CD8-positive, alpha-beta memory T cell (primary cell): ENCODE measurements at regions of chr3 and their contacts with region 1.

Region 1: GRCh38 chr3:4756855-4757574 is 222.2 kb upstream of the BHLHE40 start:
- DNase-seq: no peak
- H3K4me3 ChIP-seq: no peak overlapping the region
- H3K4me3 Mint-ChIP-seq: no peak overlapping the region
- H3K27ac ChIP-seq: no peak overlapping the region
- H3K27ac Mint-ChIP-seq: no peak overlapping the region
- H3K4me1 ChIP-seq: no peaks in the 10 kb centered on the region
- H3K4me1 Mint-ChIP-seq: peaks cover 0 to 4% (median 3%) of the 10 kb centered on the region in 3 donors
- H3K27me3 ChIP-seq: no peaks in the 10 kb centered on the region
- H3K27me3 Mint-ChIP-seq: no peaks in the 10 kb centered on the region

Region 2: DNA sequence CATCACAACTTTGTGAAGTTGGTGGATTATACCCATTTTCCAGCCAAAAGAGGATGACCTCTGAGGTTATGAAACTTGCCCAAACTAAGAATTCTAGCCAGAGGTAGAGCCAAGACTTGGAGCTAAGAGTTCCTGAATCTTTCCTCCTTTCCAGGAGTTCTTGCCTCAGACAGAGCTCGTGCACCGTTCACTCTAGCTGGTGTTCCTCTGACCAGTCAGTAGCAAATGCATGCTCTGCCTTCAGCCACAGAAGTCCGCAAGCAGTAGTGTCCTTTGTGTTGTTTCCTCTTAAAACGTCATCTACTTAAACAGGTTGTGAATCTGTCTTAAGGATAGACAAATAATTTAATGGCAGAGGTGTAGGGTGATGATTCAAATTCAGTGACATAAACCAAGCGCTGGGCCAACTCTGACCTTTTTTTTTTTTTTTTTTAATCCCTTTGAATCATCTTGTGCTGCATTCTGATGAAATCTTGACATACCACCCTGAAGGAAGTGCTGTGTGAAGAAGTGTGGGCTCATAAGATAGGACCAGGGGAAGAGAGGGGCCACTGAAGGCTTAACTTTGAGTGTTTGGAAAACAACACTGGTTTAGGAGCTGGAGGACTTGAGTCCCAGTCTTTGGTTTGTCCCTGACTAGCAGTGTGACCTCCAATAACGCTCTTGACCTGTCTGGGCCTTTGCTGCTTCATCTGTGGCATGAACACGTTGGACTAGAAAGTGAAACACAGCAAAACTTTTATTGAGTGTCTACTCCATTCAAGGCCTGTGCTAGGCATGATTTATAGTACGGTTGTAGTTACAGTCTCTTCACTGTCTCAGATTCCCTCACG is 210.5 kb before region 1 on chr3:
- CTCF ChIA-PET with region 1: no interaction called
- POLR2A ChIA-PET with region 1: interaction called, 10 read pairs
- DNase-seq: no peak
- H3K4me3 ChIP-seq: no peak overlapping the region
- H3K4me3 Mint-ChIP-seq: no peak overlapping the region
- H3K27ac ChIP-seq: no peak overlapping the region
- H3K27ac Mint-ChIP-seq: peak overlapping the region in 2 of 8 donors; percentile 11 to 65
- H3K4me1 ChIP-seq: no peaks in the 10 kb centered on the region
- H3K4me1 Mint-ChIP-seq: peaks cover 12 to 34% (median 15%) of the 10 kb centered on the region in 3 donors
- H3K27me3 ChIP-seq: no peaks in the 10 kb centered on the region
- H3K27me3 Mint-ChIP-seq: no peaks in the 10 kb centered on the region

Region 3: DNA sequence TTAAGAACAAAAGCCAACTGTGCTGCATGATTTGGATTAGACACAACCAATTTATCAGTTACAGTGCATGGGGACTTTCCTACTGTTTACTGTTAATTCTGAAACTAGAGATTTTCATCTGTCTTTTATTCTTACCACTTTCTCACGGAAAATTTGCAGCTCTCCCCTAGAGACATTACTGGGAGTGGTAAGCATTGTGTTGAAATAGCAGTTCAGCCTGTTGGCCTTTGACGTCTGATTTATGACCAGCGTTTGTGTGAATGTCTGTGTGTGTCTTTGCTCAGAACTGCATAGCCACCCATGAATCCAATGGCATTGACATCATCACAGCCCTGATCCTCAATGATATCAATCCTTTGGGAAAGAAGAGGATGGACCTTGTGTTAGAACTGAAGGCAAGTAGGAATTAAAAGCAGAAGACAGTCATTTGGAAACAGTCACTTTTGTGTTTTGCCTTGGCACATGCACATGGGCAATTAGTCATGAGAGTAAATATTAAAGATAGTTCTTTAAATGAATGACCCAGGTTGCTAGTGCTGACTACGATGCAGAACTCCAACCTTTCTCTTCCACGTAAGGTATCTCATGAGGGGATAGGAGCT is 20.1 kb after region 1 on chr3:
- CTCF ChIA-PET with region 1: no interaction called
- POLR2A ChIA-PET with region 1: no interaction called
- DNase-seq: no peak
- H3K4me3 ChIP-seq: no peak overlapping the region
- H3K4me3 Mint-ChIP-seq: no peak overlapping the region
- H3K27ac ChIP-seq: no peak overlapping the region
- H3K27ac Mint-ChIP-seq: peak overlapping the region in 4 of 8 donors; percentile 8 to 47 (median 19)
- H3K4me1 ChIP-seq: no peaks in the 10 kb centered on the region
- H3K4me1 Mint-ChIP-seq: peaks cover 0 to 24% (median 3%) of the 10 kb centered on the region in 3 donors
- H3K27me3 ChIP-seq: no peaks in the 10 kb centered on the region
- H3K27me3 Mint-ChIP-seq: peaks cover 0 to 2% of the 10 kb centered on the region in 2 donors

Region 4: GRCh38 chr3:4797201-4797705 is 40.2 kb after region 1 on chr3:
- CTCF ChIA-PET with region 1: no interaction called
- POLR2A ChIA-PET with region 1: no interaction called
- DNase-seq: no peak
- H3K4me3 ChIP-seq: no peak overlapping the region
- H3K4me3 Mint-ChIP-seq: no peak overlapping the region
- H3K27ac ChIP-seq: no peak overlapping the region
- H3K27ac Mint-ChIP-seq: no peak overlapping the region
- H3K4me1 ChIP-seq: no peaks in the 10 kb centered on the region
- H3K4me1 Mint-ChIP-seq: peaks cover 0 to 1% (median 0%) of the 10 kb centered on the region in 3 donors
- H3K27me3 ChIP-seq: no peaks in the 10 kb centered on the region
- H3K27me3 Mint-ChIP-seq: no peaks in the 10 kb centered on the region